ENCODE measurements at regions of chr1 and their contacts with region 1.

Region 1: DNA sequence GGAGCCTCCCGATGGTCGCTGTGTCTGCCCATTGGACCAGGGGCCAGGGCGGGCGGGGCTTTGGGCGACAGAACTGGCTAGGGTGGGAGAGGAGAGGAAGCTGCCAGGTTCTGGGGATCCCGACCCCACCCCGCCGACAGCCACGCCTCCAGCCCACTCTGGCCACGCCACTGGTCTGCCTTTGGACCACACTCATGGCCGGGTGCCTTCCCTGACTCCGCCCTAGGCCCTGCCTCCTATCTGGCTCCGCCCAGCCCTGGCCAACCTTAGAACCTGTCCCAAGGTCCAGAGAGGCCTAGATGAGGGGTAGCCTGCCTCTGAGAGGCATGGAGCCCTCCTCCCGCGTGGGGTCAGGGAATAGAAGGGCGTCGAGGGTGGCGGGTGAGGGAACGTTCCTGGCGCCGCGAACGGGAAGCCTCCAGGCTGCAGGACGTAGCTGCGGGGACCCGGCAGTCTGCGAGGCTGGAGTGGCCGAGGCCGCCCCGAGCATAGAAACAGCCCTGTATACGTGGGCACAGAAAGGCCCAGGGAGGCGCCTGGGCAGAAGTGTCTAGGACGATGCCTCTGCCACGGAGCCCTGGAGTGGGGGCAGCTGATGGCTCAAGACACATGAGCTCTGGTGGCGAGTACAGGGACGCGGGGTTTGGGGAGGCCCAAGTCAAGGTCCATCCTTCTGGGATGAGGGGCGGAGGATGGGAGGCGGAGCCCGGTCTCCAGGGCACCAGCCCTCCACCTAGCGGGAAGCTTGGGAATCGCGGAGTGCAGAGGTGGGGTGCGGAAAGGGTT is 11.5 kb upstream of the COL16A1 start:
- DNase-seq: peak; percentile 82 to 94 (median 92)
- ATAC-seq: peak; percentile 96
- H3K4me3 ChIP-seq: peak overlapping the region; percentile 24
- H3K27ac ChIP-seq: no peak overlapping the region
- H3K4me1 ChIP-seq: peaks cover 26 to 33% of the 10 kb centered on the region in 2 experiments; a peak in 4 of 5 replicates
- H3K27me3 ChIP-seq: peaks cover 12 to 37% of the 10 kb centered on the region in 2 experiments
- CTCF ChIP-seq: peak; percentile 77 to 91 (median 79)
- EP300 ChIP-seq: no peak
- POLR2A ChIP-seq: no peak
- RAD21 ChIP-seq: peak in 1 of 2 experiments; percentile 55; a peak in 2 of 4 replicates

Region 2: GRCh38 chr1:31422505-31423319 is 292.6 kb before region 1 on chr1:
- CTCF ChIA-PET with region 1: no interaction called
- POLR2A ChIA-PET with region 1: no interaction called
- in situ Hi-C with region 1: no loop called
- intact Hi-C with region 1: no loop called
- DNase-seq: peak; percentile 82 to 87 (median 83)
- ATAC-seq: peak; percentile 90
- H3K4me3 ChIP-seq: no peak overlapping the region
- H3K27ac ChIP-seq: no peak overlapping the region
- H3K4me1 ChIP-seq: peaks cover 0 to 12% of the 10 kb centered on the region in 2 experiments; a peak in 1 of 5 replicates
- H3K27me3 ChIP-seq: peaks cover 6 to 38% of the 10 kb centered on the region in 2 experiments; a peak in 3 of 5 replicates
- CTCF ChIP-seq: peak; percentile 92 to 99 (median 99)
- EP300 ChIP-seq: no peak
- POLR2A ChIP-seq: no peak
- RAD21 ChIP-seq: peak; percentile 97 to 98

Region 3: GRCh38 chr1:31725777-31726535 is 10.7 kb after region 1 on chr1:
- CTCF ChIA-PET with region 1: no interaction called
- POLR2A ChIA-PET with region 1: interaction called, 11 read pairs
- in situ Hi-C with region 1: no loop called
- intact Hi-C with region 1: no loop called
- DNase-seq: no peak
- ATAC-seq: no peak
- H3K4me3 ChIP-seq: no peak overlapping the region
- H3K27ac ChIP-seq: no peak overlapping the region
- H3K4me1 ChIP-seq: peaks cover 0 to 18% of the 10 kb centered on the region in 2 experiments; a peak in 1 of 5 replicates
- H3K27me3 ChIP-seq: peaks cover 43 to 72% of the 10 kb centered on the region in 2 experiments
- CTCF ChIP-seq: no peak
- EP300 ChIP-seq: no peak
- POLR2A ChIP-seq: no peak
- RAD21 ChIP-seq: no peak

Region 4: DNA sequence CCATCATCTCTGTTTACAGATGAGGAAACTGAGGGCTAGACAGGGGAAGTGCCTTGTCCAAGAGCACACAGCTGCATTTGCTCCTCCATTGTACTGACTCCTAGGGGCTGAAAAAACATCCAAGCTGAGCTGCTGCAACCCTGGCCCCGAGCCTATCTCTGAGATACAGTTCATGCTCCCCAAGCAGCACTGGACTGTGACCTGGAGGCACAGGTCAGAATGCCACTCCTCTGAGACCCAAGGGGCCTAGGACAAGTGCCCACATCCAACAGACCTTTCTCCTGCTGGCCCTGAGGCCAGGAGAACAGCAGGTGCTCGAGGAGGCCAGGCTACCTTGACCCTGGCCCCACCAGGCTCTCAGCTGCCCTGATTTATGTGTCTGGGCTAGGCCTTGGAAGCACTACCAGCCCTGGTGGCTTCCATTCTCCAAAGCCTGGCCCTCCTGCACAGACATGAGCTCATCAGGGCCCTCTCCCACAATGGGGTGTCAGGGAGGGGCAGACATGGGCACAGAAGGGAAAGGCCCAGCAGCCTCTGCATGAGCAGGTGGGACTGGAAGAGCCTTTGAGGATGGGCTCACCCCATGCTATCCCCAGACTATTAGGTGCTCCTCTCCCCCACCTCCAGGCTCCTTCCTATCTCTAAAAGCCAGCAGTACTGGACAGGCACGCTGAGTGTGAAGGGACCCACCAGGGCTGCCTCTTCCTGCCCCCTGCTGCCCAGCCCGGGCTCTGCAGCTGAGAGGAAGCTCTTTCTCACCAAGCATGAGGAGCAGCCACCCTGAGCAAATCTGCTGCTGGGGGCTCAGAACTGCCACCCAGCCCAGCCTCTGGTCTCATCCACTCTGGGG is 30.0 kb after region 1 on chr1:
- CTCF ChIA-PET with region 1: interaction called, 8 read pairs
- POLR2A ChIA-PET with region 1: interaction called, 4 read pairs
- in situ Hi-C with region 1: no loop called
- intact Hi-C with region 1: loop called (anchors 5 kb)
- DNase-seq: peak; percentile 86 to 94 (median 92)
- ATAC-seq: peak; percentile 95
- H3K4me3 ChIP-seq: no peak overlapping the region
- H3K27ac ChIP-seq: no peak overlapping the region
- H3K4me1 ChIP-seq: peaks cover 5 to 47% of the 10 kb centered on the region in 2 experiments; a peak in 4 of 5 replicates
- H3K27me3 ChIP-seq: peaks cover 0 to 24% of the 10 kb centered on the region in 2 experiments
- CTCF ChIP-seq: peak; percentile 94 to 98 (median 95)
- EP300 ChIP-seq: no peak
- POLR2A ChIP-seq: no peak
- RAD21 ChIP-seq: peak; percentile 73 to 91

Region 5: GRCh38 chr1:31789259-31790065 is 74.2 kb after region 1 on chr1:
- CTCF ChIA-PET with region 1: interaction called, 7 read pairs
- POLR2A ChIA-PET with region 1: interaction called, 6 read pairs
- in situ Hi-C with region 1: no loop called
- intact Hi-C with region 1: loop called (anchors 2 kb)
- DNase-seq: peak; percentile 95 to 99 (median 98)
- ATAC-seq: peak; percentile 91
- H3K4me3 ChIP-seq: peak overlapping the region; percentile 57
- H3K27ac ChIP-seq: no peak overlapping the region
- H3K4me1 ChIP-seq: peaks cover 9 to 29% of the 10 kb centered on the region in 2 experiments; a peak in 4 of 5 replicates
- H3K27me3 ChIP-seq: peaks cover 16 to 44% of the 10 kb centered on the region in 2 experiments
- CTCF ChIP-seq: peak; percentile 92 to 99 (median 99)
- EP300 ChIP-seq: peak; percentile 19; the same call in 1 of the 2 replicates
- POLR2A ChIP-seq: no peak
- RAD21 ChIP-seq: peak; percentile 98

Measured in K562 (cell line).